ENCODE measurements at regions of chr14 and their contacts with region 1.

Region 1: DNA sequence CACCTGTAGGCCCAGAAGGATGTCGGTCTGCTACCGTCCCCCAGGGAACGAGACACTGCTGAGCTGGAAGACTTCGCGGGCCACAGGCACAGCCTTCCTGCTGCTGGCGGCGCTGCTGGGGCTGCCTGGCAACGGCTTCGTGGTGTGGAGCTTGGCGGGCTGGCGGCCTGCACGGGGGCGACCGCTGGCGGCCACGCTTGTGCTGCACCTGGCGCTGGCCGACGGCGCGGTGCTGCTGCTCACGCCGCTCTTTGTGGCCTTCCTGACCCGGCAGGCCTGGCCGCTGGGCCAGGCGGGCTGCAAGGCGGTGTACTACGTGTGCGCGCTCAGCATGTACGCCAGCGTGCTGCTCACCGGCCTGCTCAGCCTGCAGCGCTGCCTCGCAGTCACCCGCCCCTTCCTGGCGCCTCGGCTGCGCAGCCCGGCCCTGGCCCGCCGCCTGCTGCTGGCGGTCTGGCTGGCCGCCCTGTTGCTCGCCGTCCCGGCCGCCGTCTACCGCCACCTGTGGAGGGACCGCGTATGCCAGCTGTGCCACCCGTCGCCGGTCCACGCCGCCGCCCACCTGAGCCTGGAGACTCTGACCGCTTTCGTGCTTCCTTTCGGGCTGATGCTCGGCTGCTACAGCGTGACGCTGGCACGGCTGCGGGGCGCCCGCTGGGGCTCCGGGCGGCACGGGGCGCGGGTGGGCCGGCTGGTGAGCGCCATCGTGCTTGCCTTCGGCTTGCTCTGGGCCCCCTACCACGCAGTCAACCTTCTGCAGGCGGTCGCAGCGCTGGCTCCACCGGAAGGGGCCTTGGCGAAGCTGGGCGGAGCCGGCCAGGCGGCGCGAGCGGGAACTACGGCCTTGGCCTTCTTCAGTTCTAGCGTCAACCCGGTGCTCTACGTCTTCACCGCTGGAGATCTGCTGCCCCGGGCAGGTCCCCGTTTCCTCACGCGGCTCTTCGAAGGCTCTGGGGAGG is at the start of gene LTB4R:
- DNase-seq: no peak
- ATAC-seq: no peak
- H3K4me3 ChIP-seq: no peak within 1 kb of the TSS
- H3K27ac ChIP-seq: no peak within 1 kb of the TSS
- H3K4me1 ChIP-seq: peaks cover 16% of the 10 kb centered on the region
- CTCF ChIP-seq: no peak
- EP300 ChIP-seq: no peak
- POLR2A ChIP-seq: no peak
- RAD21 ChIP-seq: no peak
- polyA plus RNA-seq, gene LTB4R: 10.2 and 13.2 TPM in 2 replicates

Region 2: DNA sequence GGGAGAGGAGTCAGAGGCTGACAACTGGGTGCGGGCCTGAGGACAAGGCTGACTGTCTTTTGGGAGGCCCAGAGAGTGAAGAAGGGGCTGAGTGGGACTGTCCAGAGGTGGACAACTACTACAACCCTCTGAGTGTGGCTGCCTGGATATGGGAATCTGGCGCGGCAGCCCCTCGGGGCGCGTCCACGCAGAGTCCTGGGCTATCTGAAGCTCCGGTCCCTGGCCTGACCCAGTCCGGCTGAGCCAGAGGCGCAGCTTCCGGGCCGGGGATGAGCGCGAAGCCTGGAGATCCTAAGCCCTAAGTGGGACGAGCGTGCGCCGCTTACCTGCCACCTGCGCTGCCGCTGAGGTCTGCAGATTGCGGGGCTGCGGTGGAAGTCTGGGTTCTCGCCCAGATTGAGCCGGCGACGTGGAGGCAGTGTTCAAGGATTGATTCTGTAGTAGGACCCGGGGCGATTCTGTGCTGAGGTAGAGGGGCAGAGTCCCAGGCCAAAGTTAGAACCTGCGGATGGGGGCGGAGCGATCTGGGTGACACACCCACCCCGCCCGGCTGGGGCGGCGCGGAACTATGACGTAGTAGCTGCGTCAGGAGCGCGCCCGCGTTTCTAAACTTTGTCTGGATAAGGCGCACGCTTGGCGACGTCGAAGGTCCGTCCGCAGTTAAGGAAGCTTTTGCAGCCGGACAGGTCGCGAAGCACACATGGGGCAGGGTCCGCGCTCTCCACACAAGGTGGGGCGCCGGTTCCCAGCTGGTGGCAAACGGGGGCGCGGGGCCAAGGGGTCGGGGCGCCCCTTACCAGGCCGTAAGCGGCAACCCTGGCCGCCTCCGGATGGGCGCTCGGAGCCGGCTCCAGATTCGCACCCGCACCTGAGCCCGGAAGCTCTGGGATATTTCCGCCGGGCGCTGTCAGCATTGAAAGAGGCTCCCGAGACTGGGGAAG is 11.4 kb before region 1 on chr14 and contains the starts of genes DHRS1 and NOP9:
- CTCF ChIA-PET with region 1: interaction called, 135 read pairs
- POLR2A ChIA-PET with region 1: interaction called, 9 read pairs
- DNase-seq: peak; percentile 87 to 91
- ATAC-seq: peak; percentile 62 to 82
- H3K4me3 ChIP-seq: peak within 1 kb of the TSS; percentile 81
- H3K27ac ChIP-seq: peak within 1 kb of the TSS; percentile 82 to 92
- H3K4me1 ChIP-seq: peaks cover 15% of the 10 kb centered on the region; the same call in 2 of the 3 replicates
- CTCF ChIP-seq: no peak
- EP300 ChIP-seq: no peak
- POLR2A ChIP-seq: peak; percentile 61
- RAD21 ChIP-seq: no peak
- polyA plus RNA-seq, gene DHRS1: 17.4 and 17.9 TPM in 2 replicates
- polyA plus RNA-seq, gene NOP9: 16.5 and 23.6 TPM in 2 replicates

Region 3: DNA sequence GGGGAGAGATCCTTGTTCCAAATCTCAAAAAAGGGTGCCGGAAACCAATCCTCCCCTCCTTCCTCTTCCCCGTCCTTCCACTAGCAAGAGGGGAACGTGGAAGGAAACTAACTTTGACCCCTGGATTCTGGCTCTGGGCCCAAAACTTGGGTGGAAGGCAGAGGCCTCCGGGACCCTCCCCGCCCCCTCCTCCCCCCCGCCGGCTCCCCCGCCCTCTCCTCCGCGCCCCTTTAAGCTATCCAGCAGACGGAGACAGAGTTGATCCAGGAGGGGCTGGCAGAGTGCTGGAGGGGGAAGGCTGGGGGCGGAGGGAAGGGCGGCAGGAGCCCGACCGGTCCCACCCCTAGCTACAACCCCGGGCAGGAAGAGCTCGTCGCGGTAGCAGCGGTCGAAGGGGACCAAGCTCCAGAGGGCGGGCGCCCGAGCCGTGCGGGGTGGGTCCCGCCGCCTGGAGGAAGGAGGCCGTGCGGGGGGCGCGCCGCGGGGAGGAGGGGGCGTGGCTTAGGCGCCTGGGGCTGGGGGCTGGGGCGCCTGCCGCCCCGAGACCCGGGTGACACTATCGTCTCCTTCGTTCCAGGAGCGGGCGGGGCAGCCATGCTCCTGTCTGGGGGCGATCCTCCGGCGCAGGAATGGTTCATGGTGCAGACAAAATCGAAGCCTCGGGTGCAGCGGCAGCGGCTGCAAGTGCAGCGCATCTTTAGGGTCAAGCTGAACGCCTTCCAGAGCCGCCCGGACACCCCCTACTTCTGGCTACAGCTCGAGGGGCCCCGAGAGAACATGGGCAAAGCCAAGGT is 87.9 kb after region 1 on chr14 and contains the start of gene NYNRIN:
- CTCF ChIA-PET with region 1: no interaction called
- POLR2A ChIA-PET with region 1: no interaction called
- DNase-seq: no peak
- ATAC-seq: peak; percentile 44 to 80; a peak in 4 of 6 replicates
- H3K4me3 ChIP-seq: peak within 1 kb of the TSS; percentile 65
- H3K27ac ChIP-seq: peak within 1 kb of the TSS; percentile 74 to 85
- H3K4me1 ChIP-seq: peaks cover 16% of the 10 kb centered on the region; the same call in 1 of the 3 replicates
- CTCF ChIP-seq: no peak
- EP300 ChIP-seq: no peak
- POLR2A ChIP-seq: no peak
- RAD21 ChIP-seq: no peak
- polyA plus RNA-seq, gene NYNRIN: 0.44 and 0.60 TPM in 2 replicates